Activated CD4-positive, alpha-beta memory T cell treated with anti-CD3 and anti-CD28 coated beads for 36 hours (primary cell): ENCODE measurements at regions of chr7 and their contacts with region 1.

Region 1: GRCh38 chr7:91082852-91083495 is 181.3 kb upstream of the FZD1 start:
- DNase-seq: no peak
- H3K4me3 Mint-ChIP-seq: no peak overlapping the region
- H3K27ac Mint-ChIP-seq: no peak overlapping the region
- H3K4me1 Mint-ChIP-seq: peaks cover 22% of the 10 kb centered on the region
- H3K27me3 Mint-ChIP-seq: no peaks in the 10 kb centered on the region

Region 2: DNA sequence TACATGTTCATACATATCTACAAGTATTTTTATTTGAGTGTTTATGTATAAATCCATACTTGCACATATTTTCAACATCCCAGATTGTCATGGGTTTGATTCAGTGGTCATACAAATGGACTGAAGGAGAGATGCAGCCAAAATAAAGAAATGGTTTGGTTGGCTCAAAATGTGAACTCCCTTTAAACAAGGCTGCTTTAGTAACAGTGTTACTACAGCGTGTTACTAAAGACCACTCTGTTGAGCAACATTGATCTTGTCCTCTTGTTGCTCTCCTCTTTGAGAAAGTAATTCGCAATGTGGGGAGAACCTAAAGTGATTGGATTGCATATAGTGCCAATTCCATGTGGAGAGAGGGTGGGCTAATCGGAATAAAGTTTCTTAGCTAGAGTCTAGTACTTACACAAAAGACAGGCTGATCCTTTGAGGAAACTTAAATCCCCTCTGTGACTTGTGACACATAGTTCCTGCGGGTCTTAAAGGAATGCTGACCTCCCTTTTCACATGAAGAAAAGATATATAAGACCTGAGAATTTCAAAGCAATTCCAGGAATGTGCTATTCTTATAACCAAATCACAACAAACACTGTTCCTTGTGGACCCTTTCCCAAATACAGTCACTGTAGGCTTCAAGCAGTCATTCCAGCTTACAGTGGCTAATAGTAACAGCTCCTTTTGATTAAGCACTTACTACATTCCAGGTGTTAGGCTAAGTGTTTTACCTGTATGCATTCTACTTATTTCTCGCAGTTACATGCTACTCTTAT is 325.6 kb after region 1 on chr7:
- CTCF ChIA-PET with region 1: no interaction called
- POLR2A ChIA-PET with region 1: no interaction called
- intact Hi-C with region 1: no loop called
- DNase-seq: no peak
- H3K4me3 Mint-ChIP-seq: no peak overlapping the region
- H3K27ac Mint-ChIP-seq: no peak overlapping the region
- H3K4me1 Mint-ChIP-seq: no peaks in the 10 kb centered on the region
- H3K27me3 Mint-ChIP-seq: no peaks in the 10 kb centered on the region

Region 3: GRCh38 chr7:91784463-91784862 is 701.5 kb after region 1 on chr7:
- CTCF ChIA-PET with region 1: no interaction called
- POLR2A ChIA-PET with region 1: no interaction called
- intact Hi-C with region 1: loop called (anchors 5 kb)
- DNase-seq: no peak
- H3K4me3 Mint-ChIP-seq: no peak overlapping the region
- H3K27ac Mint-ChIP-seq: no peak overlapping the region
- H3K4me1 Mint-ChIP-seq: no peaks in the 10 kb centered on the region
- H3K27me3 Mint-ChIP-seq: no peaks in the 10 kb centered on the region